Naive thymus-derived CD4-positive, alpha-beta T cell (primary cell): ENCODE measurements at regions of chr7 and their contacts with region 1.

Region 1: DNA sequence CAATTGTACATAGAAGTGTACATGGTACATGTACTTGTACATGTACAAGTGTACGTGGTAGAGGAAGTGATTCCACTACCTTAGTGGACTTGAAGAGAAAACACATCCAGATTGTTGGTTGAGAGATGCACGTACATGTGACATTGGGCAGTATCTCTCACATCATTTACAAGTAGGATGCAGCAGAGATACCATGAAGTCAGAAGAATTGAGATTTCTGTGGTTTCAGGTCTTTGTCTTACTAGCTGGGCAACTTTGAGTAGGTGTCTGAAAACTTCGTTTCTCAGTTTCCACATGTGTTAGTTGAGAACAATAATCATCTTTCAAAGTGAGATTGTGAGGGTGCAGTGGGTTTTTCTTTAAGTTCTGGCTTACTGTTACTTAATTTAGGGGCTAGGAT is 21.5 kb downstream of the CLDN12 start:
- DNase-seq: no peak
- ATAC-seq: no peak
- H3K4me3 ChIP-seq: no peak overlapping the region
- H3K4me3 Mint-ChIP-seq: peak overlapping the region in 1 of 10 donors; percentile 23
- H3K27ac ChIP-seq: no peak overlapping the region
- H3K27ac Mint-ChIP-seq: peak overlapping the region in 2 of 9 donors; percentile 26 to 60
- H3K4me1 ChIP-seq: no peaks in the 10 kb centered on the region
- H3K4me1 Mint-ChIP-seq: peaks cover 0 to 16% (median 0%) of the 10 kb centered on the region in 7 donors
- H3K27me3 ChIP-seq: no peaks in the 10 kb centered on the region
- H3K27me3 Mint-ChIP-seq: peaks cover 0 to 11% (median 7%) of the 10 kb centered on the region in 5 donors

Region 2: GRCh38 chr7:88546808-88547207 is 1877.9 kb before region 1 on chr7:
- CTCF ChIA-PET with region 1: no interaction called
- POLR2A ChIA-PET with region 1: no interaction called
- intact Hi-C with region 1: loop called in 1 of 2 experiments (anchors 5 kb)
- DNase-seq: peak in 1 of 9 donors; percentile 3
- ATAC-seq: no peak
- H3K4me3 ChIP-seq: no peak overlapping the region
- H3K4me3 Mint-ChIP-seq: no peak overlapping the region
- H3K27ac ChIP-seq: no peak overlapping the region
- H3K27ac Mint-ChIP-seq: no peak overlapping the region
- H3K4me1 ChIP-seq: no peaks in the 10 kb centered on the region
- H3K4me1 Mint-ChIP-seq: no peaks in the 10 kb centered on the region
- H3K27me3 ChIP-seq: no peaks in the 10 kb centered on the region
- H3K27me3 Mint-ChIP-seq: peaks cover 0 to 5% (median 0%) of the 10 kb centered on the region in 5 donors

Region 3: GRCh38 chr7:90155206-90155605 is 269.5 kb before region 1 on chr7:
- CTCF ChIA-PET with region 1: interaction called, 47 read pairs
- POLR2A ChIA-PET with region 1: no interaction called
- intact Hi-C with region 1: loop called (anchors 1 kb)
- DNase-seq: no peak
- ATAC-seq: no peak
- H3K4me3 ChIP-seq: no peak overlapping the region
- H3K4me3 Mint-ChIP-seq: peak overlapping the region in 3 of 10 donors; percentile 55 to 64 (median 59)
- H3K27ac ChIP-seq: no peak overlapping the region
- H3K27ac Mint-ChIP-seq: no peak overlapping the region
- H3K4me1 ChIP-seq: no peaks in the 10 kb centered on the region
- H3K4me1 Mint-ChIP-seq: peaks cover 0 to 7% (median 2%) of the 10 kb centered on the region in 7 donors
- H3K27me3 ChIP-seq: no peaks in the 10 kb centered on the region
- H3K27me3 Mint-ChIP-seq: peaks cover 11 to 39% (median 30%) of the 10 kb centered on the region in 5 donors

Region 4: GRCh38 chr7:90262438-90262837 is 162.3 kb before region 1 on chr7:
- CTCF ChIA-PET with region 1: no interaction called
- POLR2A ChIA-PET with region 1: no interaction called
- intact Hi-C with region 1: loop called (anchors 2 kb)
- DNase-seq: peak in 1 of 9 donors; percentile 4
- ATAC-seq: no peak
- H3K4me3 ChIP-seq: no peak overlapping the region
- H3K4me3 Mint-ChIP-seq: no peak overlapping the region
- H3K27ac ChIP-seq: no peak overlapping the region
- H3K27ac Mint-ChIP-seq: no peak overlapping the region
- H3K4me1 ChIP-seq: no peaks in the 10 kb centered on the region
- H3K4me1 Mint-ChIP-seq: no peaks in the 10 kb centered on the region
- H3K27me3 ChIP-seq: no peaks in the 10 kb centered on the region
- H3K27me3 Mint-ChIP-seq: peaks cover 6 to 27% (median 13%) of the 10 kb centered on the region in 5 donors

Region 5: DNA sequence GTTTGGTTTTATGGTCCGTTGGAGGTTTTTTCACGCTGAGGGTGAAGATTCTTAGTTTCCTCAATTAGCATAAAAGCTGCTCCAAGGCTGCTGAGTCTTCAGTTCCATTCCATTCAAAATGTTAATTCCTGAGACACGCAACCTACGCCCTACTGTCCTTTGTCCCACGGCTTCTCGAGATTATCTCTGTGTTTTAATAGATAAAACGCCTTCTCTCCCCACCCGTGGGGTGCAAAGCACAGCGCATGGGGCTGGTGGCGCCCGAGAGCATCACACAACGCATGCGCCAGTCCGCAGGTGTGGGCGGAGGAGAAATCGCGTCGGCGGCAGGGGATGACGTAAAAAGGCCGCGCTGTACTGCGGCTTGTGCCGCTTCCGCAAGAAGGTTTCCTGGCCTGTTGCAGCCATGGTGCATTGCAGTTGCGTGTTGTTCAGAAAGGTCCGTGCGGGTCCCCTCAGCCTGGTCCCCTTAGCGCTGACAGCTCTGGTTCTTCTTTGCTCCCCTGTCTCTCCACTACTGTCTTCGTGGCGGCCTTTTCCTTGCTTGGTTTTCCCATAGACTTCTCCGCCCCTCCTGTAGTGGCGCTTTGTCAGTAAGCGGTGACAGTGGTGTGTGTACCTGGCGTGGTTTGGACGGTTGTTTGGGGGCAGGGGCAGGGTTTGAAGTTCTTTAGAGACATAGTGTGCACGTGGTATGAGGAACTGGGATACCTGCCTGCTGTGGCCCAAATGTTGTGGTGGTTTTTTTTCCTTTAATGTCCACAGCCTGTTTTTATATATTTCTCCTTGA is 78.2 kb before region 1 on chr7 and contains the start of gene GTPBP10:
- CTCF ChIA-PET with region 1: no interaction called
- POLR2A ChIA-PET with region 1: no interaction called
- intact Hi-C with region 1: loop called (anchors 1 kb)
- DNase-seq: peak; percentile 88 to 96 (median 94)
- ATAC-seq: peak; percentile 99
- H3K4me3 ChIP-seq: peak within 1 kb of the TSS; percentile 83
- H3K4me3 Mint-ChIP-seq: peak within 1 kb of the TSS; percentile 93 to 99 (median 98)
- H3K27ac ChIP-seq: peak within 1 kb of the TSS; percentile 95
- H3K27ac Mint-ChIP-seq: peak within 1 kb of the TSS; percentile 96 to 100 (median 99)
- H3K4me1 ChIP-seq: peaks cover 13 to 26% of the 10 kb centered on the region in 2 donors
- H3K4me1 Mint-ChIP-seq: peaks cover 23 to 65% (median 53%) of the 10 kb centered on the region in 7 donors
- H3K27me3 ChIP-seq: no peaks in the 10 kb centered on the region
- H3K27me3 Mint-ChIP-seq: peaks cover 0 to 2% (median 0%) of the 10 kb centered on the region in 5 donors
- total RNA-seq, gene GTPBP10: 21.5 to 51.4 (median 29.8) TPM